Endothelial cell of umbilical vein (primary cell): ENCODE measurements at regions of chr6 and their contacts with region 1.

Region 1: DNA sequence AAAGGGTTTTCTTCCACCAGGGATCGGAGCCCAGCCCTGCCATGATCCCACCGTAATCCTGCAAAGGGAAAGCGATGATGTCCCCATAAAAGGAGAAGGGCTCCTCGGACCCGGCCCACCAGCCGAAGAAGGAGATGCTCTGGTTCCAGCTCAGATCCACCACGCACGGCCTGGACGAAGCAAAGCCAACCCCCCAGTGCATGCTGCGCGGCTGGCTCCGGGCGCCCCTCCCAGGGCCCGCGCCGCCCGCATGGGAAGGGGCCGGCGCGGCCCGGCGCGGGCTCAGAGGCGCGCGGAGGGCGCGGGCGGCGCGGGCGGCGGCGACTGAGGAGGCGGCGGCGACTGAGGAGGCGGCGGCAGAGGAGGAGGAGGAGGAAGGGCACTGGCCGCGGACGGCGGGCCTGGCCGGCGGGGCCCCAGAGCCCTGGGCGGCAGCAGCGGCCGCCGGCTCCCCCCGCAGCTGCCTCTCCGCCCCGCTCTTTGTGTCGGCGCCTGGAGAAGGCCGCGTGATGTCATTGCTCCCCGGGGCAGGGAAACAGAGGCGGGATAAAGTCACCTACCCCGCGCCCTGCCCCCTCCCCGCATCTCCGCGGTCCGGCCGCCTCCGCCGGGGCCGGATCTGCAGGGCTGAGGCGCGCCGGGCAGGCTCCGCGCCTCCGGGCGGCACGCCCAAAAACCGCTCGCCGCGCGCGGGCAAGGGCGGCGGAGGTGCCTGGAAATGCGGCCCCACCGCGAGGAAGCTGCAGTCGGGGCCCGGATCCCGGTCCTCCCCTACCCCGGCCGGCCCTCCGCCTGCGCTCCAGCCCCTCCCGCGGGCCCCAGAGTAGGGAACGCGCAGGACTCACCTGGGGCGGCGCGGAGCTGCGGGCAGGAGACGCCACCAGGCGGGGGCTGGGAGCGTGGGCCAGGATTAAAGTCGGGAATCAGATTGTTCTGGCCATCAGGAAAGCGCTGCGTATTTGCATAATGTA is at the start of gene FAXC:
- DNase-seq: peak; percentile 25
- H3K4me3 ChIP-seq: peak within 1 kb of the TSS; percentile 57 to 60 (median 58)
- H3K27ac ChIP-seq: no peak within 1 kb of the TSS
- H3K4me1 ChIP-seq: peaks cover 15% of the 10 kb centered on the region
- H3K27me3 ChIP-seq: peaks cover 8 to 11% of the 10 kb centered on the region in 2 experiments
- CTCF ChIP-seq: no peak
- POLR2A ChIP-seq: no peak
- total RNA-seq, gene FAXC: 3.6 and 8.4 TPM in 2 replicates

Region 2: DNA sequence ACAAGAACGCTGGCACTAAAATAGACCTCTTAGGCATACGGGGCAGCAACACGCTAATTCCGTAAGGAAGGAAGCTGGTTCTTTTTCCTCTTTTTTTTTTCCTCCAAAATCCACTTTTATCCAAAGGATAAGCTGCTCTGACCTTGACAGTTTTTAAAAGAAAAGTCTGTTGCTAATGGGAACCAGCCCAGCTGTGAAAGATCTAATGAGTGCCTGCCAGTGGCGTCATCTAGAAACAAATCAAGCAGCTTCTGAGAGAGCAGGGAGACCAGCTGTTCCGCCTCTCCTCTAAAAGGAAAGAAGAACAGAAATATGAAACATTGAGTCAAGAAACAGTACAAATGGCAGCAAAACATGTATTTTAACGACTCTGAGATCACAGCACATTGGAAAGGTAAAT is 78.6 kb before region 1 on chr6:
- CTCF ChIA-PET with region 1: no interaction called
- POLR2A ChIA-PET with region 1: no interaction called
- dilution Hi-C with region 1: no loop called
- intact Hi-C with region 1: no loop called
- DNase-seq: no peak
- H3K4me3 ChIP-seq: no peak overlapping the region
- H3K27ac ChIP-seq: no peak overlapping the region
- H3K4me1 ChIP-seq: no peaks in the 10 kb centered on the region
- H3K27me3 ChIP-seq: no peaks in the 10 kb centered on the region
- CTCF ChIP-seq: no peak
- POLR2A ChIP-seq: no peak

Region 3: DNA sequence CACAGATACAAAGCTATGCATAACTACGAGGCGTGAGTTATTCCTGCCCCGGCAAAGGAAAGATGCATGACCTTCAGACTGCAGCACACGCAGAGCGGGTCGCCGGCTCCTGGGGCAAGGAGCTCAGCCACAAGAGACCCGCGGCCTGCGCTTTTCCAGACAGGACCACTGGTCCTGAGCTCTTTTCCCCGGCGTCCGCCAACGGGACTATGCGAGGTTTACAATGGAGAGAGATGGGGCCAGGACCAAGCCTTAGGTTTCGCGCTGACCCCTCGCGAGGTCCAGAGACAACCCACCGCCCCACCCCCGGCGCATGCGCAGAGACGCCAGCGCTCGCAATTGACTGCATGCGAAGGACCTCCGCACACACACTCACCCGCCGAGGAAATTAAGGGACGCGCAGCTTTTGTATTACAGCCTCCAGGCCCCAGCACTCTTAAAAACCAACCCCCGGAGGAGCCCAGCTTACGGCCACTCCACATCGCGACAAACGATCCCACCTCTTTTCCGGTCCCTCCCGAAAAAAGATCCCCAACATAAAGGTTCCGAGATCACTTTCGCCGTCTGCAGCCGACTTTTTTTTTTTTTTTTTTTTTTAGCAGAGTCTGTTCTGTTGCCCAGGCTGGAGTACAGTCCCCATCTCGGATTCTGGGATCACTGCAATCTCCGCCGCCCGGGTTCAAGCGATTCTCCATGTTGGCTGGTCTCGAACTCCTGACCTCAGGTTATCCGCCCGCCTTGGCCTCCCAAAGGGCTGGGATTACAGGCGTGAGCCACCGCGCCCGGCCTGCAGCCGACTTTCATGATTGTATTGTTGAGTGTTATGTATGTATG is 44.5 kb after region 1 on chr6 and contains the start of gene COQ3:
- CTCF ChIA-PET with region 1: interaction called, 3 read pairs
- POLR2A ChIA-PET with region 1: no interaction called
- dilution Hi-C with region 1: no loop called
- intact Hi-C with region 1: loop called (anchors 2 kb)
- DNase-seq: peak; percentile 85
- H3K4me3 ChIP-seq: peak within 1 kb of the TSS; percentile 59 to 98 (median 84)
- H3K27ac ChIP-seq: peak within 1 kb of the TSS; percentile 81
- H3K4me1 ChIP-seq: peaks cover 5% of the 10 kb centered on the region
- H3K27me3 ChIP-seq: no peaks in the 10 kb centered on the region
- CTCF ChIP-seq: no peak
- POLR2A ChIP-seq: peak; percentile 73
- total RNA-seq, gene COQ3: 7.5 and 9.1 TPM in 2 replicates

Region 4: DNA sequence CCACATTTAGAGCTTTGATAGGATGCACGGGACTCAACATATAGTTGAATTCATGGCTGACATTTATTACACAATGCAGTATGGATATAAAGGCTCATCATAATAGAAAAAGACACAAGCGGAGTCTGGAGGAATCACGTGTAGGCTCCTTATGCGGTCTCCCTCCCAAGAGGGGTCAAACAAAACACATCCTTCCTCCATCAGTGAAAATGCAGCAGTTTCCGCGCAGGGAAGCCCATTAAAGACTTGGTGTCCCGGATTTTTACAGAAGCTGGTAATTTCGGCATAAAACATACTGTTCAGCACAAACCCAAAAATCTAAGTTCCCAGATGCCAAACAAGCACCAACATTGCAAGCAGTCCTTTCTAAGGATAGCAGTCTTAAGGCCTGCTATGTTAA is 164.6 kb after region 1 on chr6:
- CTCF ChIA-PET with region 1: no interaction called
- POLR2A ChIA-PET with region 1: no interaction called
- dilution Hi-C with region 1: no loop called
- intact Hi-C with region 1: loop called (anchors 10 kb)
- DNase-seq: peak; percentile 36
- H3K4me3 ChIP-seq: peak overlapping the region; percentile 17 to 86 (median 76)
- H3K27ac ChIP-seq: no peak overlapping the region
- H3K4me1 ChIP-seq: peaks cover 13% of the 10 kb centered on the region
- H3K27me3 ChIP-seq: no peaks in the 10 kb centered on the region
- CTCF ChIP-seq: no peak
- POLR2A ChIP-seq: no peak